ENCODE measurements at regions of chr13 and their contacts with region 1.

Region 1: DNA sequence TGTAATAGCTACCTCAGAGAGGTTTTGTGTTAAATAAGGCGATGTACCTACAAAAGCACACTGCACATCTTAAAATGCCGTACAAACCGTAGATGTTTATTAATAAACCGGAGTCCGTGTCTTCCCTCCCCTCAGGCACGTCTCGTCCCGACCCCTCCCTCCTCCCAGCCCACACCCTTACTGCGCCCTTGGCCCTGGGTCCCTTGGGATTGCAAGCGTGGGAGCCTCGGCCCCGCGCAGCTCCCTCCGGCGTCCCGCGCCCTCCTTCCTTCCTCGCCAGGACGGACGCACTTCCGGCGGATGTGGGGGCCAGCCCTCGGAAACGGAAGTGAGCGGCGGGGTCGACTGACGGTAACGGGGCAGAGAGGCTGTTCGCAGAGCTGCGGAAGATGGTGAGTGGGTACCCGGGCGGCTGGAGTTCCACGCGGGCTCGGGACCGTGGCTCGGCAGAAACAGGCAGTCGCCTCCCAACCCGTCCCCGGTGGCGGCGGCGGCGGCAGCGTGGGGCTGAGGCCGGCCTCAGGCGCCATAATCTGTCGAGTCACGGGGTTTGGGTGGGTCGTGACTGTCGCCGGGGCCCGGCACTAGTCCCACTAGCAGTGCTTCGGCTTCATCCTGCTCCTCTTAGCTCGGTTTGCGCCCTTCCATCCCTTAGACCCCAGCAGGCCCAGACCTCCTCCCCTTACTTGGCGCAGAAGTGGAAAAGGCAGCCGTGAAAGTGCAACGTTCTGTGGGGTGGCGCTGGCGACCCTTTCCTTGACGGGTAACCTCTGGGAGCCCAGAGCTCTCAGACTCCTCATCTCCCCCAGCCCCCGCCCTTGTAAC is at the start of gene POMP:
- DNase-seq: peak; percentile 85 to 95 (median 91)
- ATAC-seq: peak; percentile 90 to 91
- H3K4me3 Mint-ChIP-seq: peak within 1 kb of the TSS; percentile 95 to 100 (median 98)
- H3K27ac Mint-ChIP-seq: peak within 1 kb of the TSS; percentile 83 to 100 (median 99)
- H3K4me1 Mint-ChIP-seq: peaks cover 42 to 69% (median 68%) of the 10 kb centered on the region in 4 donors
- H3K27me3 Mint-ChIP-seq: peaks cover 0 to 1% (median 0%) of the 10 kb centered on the region in 5 donors
- polyA plus RNA-seq, gene POMP: 74.9 to 93.4 (median 90.5) TPM

Region 2: GRCh38 chr13:28718543-28719226 is 59.7 kb after region 1 on chr13 and contains the start of gene SLC46A3:
- POLR2A ChIA-PET with region 1: interaction called, 30 read pairs
- DNase-seq: peak; percentile 94 to 99 (median 96)
- ATAC-seq: peak; percentile 97 to 98
- H3K4me3 Mint-ChIP-seq: peak within 1 kb of the TSS; percentile 89 to 98 (median 94)
- H3K27ac Mint-ChIP-seq: peak within 1 kb of the TSS; percentile 93 to 99 (median 97)
- H3K4me1 Mint-ChIP-seq: peaks cover 20 to 44% (median 38%) of the 10 kb centered on the region in 4 donors
- H3K27me3 Mint-ChIP-seq: peaks cover 0 to 2% (median 0%) of the 10 kb centered on the region in 5 donors
- polyA plus RNA-seq, gene SLC46A3: 29.6 to 35.9 (median 34.8) TPM